ENCODE measurements at regions of chr6 and their contacts with region 1.

Region 1: DNA sequence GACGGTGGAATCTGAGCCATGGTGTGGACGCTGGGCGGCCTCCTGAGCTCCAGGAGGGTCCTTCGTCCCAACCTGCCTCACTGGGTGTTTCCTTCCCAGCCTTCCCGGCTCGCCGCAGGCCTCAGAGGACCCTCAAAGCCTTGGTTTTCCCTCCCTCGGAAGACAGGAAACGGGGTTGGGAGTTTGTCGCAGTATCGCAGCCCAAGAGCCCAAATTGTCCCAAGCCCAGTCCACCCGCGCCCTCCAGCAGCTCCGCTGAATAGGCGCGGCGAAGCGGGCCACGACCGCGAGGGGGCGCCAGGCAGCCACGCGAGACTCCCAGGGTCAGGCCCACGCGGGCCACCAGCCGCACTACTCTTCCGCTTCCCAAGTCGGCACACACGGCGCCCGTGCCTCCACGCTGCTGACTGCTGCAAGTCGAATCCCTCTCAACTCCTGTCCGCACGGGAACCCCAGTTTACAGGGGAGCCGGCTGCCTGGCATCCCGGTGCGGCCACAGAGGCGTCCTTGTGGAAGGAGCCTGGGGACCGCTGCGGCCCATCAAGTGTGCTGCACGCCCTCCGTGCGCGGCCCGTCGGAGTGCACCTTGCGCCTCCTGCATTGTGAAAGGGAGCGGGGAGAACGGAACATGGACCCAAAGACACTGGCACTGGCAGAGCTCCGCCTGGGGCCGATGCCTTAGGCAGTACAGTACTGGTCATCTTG is 40.4 kb upstream of the HMGA1 start:
- DNase-seq: peak; percentile 92 to 98
- ATAC-seq: peak; percentile 98
- H3K4me3 ChIP-seq: peak overlapping the region in 1 of 2 donors; percentile 3
- H3K27ac ChIP-seq: no peak overlapping the region
- H3K4me1 ChIP-seq: no peaks in the 10 kb centered on the region
- H3K27me3 ChIP-seq: no peaks in the 10 kb centered on the region

Region 2: GRCh38 chr6:34414999-34415858 is 219.0 kb after region 1 on chr6:
- intact Hi-C with region 1: loop called (anchors 2 kb)
- DNase-seq: peak in 1 of 2 donors; percentile 69
- ATAC-seq: peak; percentile 94
- H3K4me3 ChIP-seq: no peak overlapping the region
- H3K27ac ChIP-seq: peak overlapping the region; percentile 65 to 70
- H3K4me1 ChIP-seq: no peaks in the 10 kb centered on the region
- H3K27me3 ChIP-seq: no peaks in the 10 kb centered on the region

Measured in aorta (tissue), 5 donors.